Lower leg skin (tissue), 4 donors: ENCODE measurements at regions of chr3 and their contacts with region 1.

Region 1: GRCh38 chr3:69306239-69307185 is 79.4 kb downstream of the FRMD4B start:
- DNase-seq: peak; percentile 81 to 92
- H3K4me3 ChIP-seq: no peak overlapping the region
- CTCF ChIP-seq: peak in 1 of 3 donors; percentile 78
- POLR2A ChIP-seq: no peak

Region 2: DNA sequence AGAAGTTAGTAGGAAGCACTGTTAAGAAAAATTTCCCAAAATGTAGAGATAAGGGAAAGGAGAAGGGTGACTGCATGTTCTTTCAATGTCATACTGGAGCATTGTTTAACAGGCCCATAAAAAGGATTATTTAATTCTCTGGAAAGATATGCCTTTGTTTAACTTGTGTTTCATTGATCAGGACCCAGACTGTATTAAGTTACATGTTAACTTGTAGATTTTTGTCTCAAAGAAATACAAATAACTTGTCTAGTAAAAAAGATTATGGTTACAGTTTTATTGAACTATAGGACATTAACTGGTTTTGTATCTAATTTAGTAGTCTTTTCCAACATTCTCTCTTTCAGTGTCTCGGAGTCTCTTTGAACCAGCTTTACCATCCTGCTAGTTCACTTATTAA is 134.5 kb before region 1 on chr3:
- intact Hi-C with region 1: loop called (anchors 2 kb)
- DNase-seq: no peak
- H3K4me3 ChIP-seq: no peak overlapping the region
- CTCF ChIP-seq: no peak
- POLR2A ChIP-seq: no peak